ENCODE measurements at regions of chr9 and their contacts with region 1.

Region 1: DNA sequence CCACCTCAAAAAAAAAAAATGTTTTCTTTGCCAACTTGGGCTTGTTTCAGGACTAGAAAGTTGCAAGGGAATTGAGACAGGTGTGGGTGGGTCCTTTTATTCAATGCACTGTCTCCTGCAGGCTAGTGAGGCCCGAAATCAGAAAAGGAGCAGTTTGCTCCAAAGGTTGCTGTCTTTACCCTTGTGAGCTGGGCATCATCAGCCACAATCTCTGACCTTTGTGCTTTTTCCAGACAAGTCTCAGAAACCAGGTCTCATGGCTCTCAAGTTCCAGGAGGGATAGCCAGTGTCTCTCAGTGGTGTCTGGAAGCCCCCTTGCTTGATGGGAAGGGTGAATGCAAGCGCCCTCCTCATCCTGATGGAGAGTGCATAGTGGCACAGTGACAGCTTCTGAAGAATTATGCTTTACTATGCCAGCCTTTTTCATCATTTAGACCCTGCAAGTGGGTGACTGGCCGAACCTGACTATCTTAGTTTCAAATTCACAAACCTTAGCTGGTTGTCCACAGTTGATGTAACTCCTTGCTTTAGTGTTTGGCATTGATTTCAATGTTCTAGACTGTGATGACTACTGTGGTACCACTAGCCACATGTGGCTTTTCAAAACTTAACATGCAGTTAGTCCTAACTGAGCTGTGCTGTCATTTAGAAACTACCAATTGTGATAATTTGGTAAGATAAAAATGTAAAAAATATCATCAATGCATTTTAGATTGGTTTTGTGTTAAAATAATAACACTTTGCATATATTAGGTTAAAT is 468.6 kb downstream of the GADD45G start:
- DNase-seq: no peak
- H3K4me3 ChIP-seq: no peak overlapping the region
- H3K27ac ChIP-seq: no peak overlapping the region
- H3K4me1 ChIP-seq: no peaks in the 10 kb centered on the region
- H3K27me3 ChIP-seq: peaks cover 60% of the 10 kb centered on the region
- CTCF ChIP-seq: no peak

Region 2: GRCh38 chr9:90062982-90063381 is 10.4 kb before region 1 on chr9:
- CTCF ChIA-PET with region 1: no interaction called
- POLR2A ChIA-PET with region 1: no interaction called
- intact Hi-C with region 1: loop called (anchors 1 kb)
- DNase-seq: no peak
- H3K4me3 ChIP-seq: no peak overlapping the region
- H3K27ac ChIP-seq: no peak overlapping the region
- H3K4me1 ChIP-seq: no peaks in the 10 kb centered on the region
- H3K27me3 ChIP-seq: peaks cover 53% of the 10 kb centered on the region
- CTCF ChIP-seq: no peak